ENCODE measurements at regions of chr1 and their contacts with region 1.

Region 1: GRCh38 chr1:102365071-102365470 is 368.3 kb upstream of the OLFM3 start:
- DNase-seq: no peak
- ATAC-seq: no peak
- H3K4me3 ChIP-seq: no peak overlapping the region
- H3K27ac ChIP-seq: no peak overlapping the region
- H3K4me1 ChIP-seq: no peaks in the 10 kb centered on the region
- H3K27me3 ChIP-seq: no peaks in the 10 kb centered on the region
- CTCF ChIP-seq: no peak

Region 2: DNA sequence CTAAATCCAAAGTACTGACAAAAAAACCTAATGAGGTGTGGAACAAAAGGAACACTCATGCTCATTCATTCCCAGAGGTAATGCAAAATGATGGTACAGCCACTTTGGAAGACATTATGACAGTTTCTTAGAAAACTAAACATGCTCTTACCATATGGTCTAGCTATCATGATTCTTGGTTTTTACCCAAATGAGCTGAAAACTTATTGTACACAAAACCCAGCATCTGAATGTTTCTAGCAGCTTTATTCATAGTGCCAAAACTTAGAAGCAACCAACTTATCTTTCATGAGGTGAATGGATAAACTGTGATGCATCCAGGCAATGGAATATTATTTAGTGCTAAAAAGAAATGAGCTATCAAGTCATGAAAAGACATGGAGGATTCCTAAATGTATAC is 50.0 kb before region 1 on chr1:
- intact Hi-C with region 1: loop called in 1 of 10 experiments (anchors 10 kb)
- DNase-seq: no peak
- ATAC-seq: no peak
- H3K4me3 ChIP-seq: no peak overlapping the region
- H3K27ac ChIP-seq: no peak overlapping the region
- H3K4me1 ChIP-seq: no peaks in the 10 kb centered on the region
- H3K27me3 ChIP-seq: no peaks in the 10 kb centered on the region
- CTCF ChIP-seq: no peak

Region 3: DNA sequence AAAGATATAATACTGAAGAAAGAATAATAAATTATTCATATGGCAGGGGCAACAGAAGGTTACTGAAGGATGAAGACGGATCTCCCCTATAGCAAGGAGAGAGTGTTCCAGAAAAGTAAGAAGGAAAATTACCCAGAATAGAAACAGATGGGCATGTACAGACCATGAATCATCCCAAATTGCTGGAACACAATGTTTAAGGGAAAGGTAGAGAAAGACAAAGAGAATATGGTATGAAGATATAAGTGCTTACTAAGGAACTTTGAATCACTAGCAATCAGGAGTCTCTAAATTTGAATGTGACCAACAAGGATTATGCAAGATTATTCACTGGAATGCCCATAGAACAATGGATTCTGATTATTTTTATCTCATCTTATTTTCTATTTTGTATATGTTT is 367.9 kb after region 1 on chr1:
- intact Hi-C with region 1: no loop called
- DNase-seq: no peak
- ATAC-seq: no peak
- H3K4me3 ChIP-seq: no peak overlapping the region
- H3K27ac ChIP-seq: no peak overlapping the region
- H3K4me1 ChIP-seq: no peaks in the 10 kb centered on the region
- H3K27me3 ChIP-seq: no peaks in the 10 kb centered on the region
- CTCF ChIP-seq: no peak